T-cell (primary cell): ENCODE measurements at regions of chr5 and their contacts with region 1.

Region 1: GRCh38 chr5:57986761-57987341 is 473.0 kb downstream of the PLK2 start:
- DNase-seq: no peak
- ATAC-seq: no peak
- H3K4me3 ChIP-seq: no peak overlapping the region
- H3K4me3 Mint-ChIP-seq: no peak overlapping the region
- H3K27ac ChIP-seq: no peak overlapping the region
- H3K27ac Mint-ChIP-seq: no peak overlapping the region
- H3K4me1 ChIP-seq: no peaks in the 10 kb centered on the region
- H3K4me1 Mint-ChIP-seq: no peaks in the 10 kb centered on the region
- H3K27me3 ChIP-seq: no peaks in the 10 kb centered on the region
- H3K27me3 Mint-ChIP-seq: peaks cover 0 to 13% of the 10 kb centered on the region in 2 donors

Region 2: DNA sequence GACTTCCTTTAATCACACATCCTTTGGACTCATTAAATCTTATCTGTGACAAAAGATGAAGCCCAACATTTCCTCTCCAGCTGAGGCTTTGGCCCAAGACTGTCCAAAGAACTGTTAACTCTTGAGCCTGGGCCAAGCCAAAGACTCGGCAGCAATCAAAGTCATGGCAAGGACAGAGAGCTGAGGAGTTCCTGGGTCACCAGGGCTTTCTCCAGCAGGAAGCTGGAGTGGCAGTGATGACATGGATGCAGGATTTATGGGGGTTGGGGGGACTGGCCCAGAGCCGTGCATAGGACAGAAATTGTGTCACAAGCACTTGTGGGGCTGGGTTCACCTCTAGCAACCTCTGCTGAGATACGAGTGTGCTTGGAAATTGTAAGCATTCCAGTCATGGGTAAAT is 32.8 kb after region 1 on chr5:
- CTCF ChIA-PET with region 1: no interaction called
- POLR2A ChIA-PET with region 1: interaction called in 1 of 2 experiments, 10 read pairs
- DNase-seq: no peak
- ATAC-seq: no peak
- H3K4me3 ChIP-seq: no peak overlapping the region
- H3K4me3 Mint-ChIP-seq: no peak overlapping the region
- H3K27ac ChIP-seq: no peak overlapping the region
- H3K27ac Mint-ChIP-seq: no peak overlapping the region
- H3K4me1 ChIP-seq: no peaks in the 10 kb centered on the region
- H3K4me1 Mint-ChIP-seq: no peaks in the 10 kb centered on the region
- H3K27me3 ChIP-seq: peaks cover 0 to 3% of the 10 kb centered on the region in 2 experiments
- H3K27me3 Mint-ChIP-seq: peaks cover 1 to 7% of the 10 kb centered on the region in 2 donors

Region 3: GRCh38 chr5:58056546-58056945 is 69.7 kb after region 1 on chr5:
- CTCF ChIA-PET with region 1: no interaction called
- POLR2A ChIA-PET with region 1: no interaction called
- DNase-seq: no peak
- ATAC-seq: no peak
- H3K4me3 ChIP-seq: no peak overlapping the region
- H3K4me3 Mint-ChIP-seq: no peak overlapping the region
- H3K27ac ChIP-seq: no peak overlapping the region
- H3K27ac Mint-ChIP-seq: no peak overlapping the region
- H3K4me1 ChIP-seq: no peaks in the 10 kb centered on the region
- H3K4me1 Mint-ChIP-seq: no peaks in the 10 kb centered on the region
- H3K27me3 ChIP-seq: no peaks in the 10 kb centered on the region
- H3K27me3 Mint-ChIP-seq: peaks cover 2 to 4% of the 10 kb centered on the region in 2 donors